ENCODE measurements at regions of chr19 and their contacts with region 1.

Region 1: DNA sequence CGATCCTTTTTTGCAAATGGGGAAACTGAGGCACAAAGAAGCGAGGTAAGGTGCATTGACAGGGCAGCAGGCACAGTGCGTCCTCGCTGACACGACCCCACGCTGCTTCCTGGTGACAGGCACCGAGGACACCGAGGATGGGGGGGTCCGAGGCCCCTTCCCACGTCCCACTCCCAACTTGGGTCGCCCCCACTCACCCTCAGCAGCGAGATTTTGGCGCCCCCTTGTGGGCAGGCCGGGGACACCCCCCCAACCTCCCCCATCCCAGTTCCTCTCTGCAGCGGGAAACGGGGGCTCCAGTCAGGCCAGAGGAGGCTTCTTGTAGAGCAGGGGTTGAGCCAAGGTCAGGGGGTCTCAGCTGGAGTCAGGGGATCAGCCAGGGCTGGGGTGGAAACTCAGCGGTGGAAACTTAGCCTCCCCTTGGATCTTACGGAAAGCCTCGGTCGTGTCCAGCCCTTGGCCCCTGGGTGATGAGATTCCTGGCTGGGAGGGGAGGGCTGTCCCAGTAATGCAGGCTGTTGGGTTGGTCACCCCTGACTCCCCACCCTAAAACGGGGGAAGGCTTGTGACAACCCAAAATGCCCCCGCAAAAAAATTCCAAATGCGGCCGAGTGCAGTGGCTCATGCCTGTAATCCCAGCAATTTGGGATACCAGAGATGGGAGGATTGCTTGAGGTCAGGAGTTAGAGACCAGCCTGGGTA is 8.2 kb downstream of the SMIM24 start:
- DNase-seq: peak in 1 of 2 donors; percentile 22
- H3K4me3 ChIP-seq: no peak overlapping the region
- H3K27ac ChIP-seq: no peak overlapping the region
- H3K4me1 ChIP-seq: peaks cover 0 to 6% of the 10 kb centered on the region in 2 donors
- H3K27me3 ChIP-seq: no peaks in the 10 kb centered on the region
- CTCF ChIP-seq: peak; percentile 46 to 90 (median 66)
- POLR2A ChIP-seq: no peak

Region 2: GRCh38 chr19:3304871-3305423 is 167.2 kb before region 1 on chr19:
- intact Hi-C with region 1: no loop called
- DNase-seq: peak; percentile 62 to 76
- H3K4me3 ChIP-seq: no peak overlapping the region
- H3K27ac ChIP-seq: no peak overlapping the region
- H3K4me1 ChIP-seq: peaks cover 0 to 4% of the 10 kb centered on the region in 2 donors
- H3K27me3 ChIP-seq: no peaks in the 10 kb centered on the region
- CTCF ChIP-seq: peak; percentile 70 to 88 (median 80)
- POLR2A ChIP-seq: no peak

Region 3: GRCh38 chr19:3333662-3334061 is 138.4 kb before region 1 on chr19:
- intact Hi-C with region 1: loop called (anchors 2 kb)
- DNase-seq: no peak
- H3K4me3 ChIP-seq: no peak overlapping the region
- H3K27ac ChIP-seq: peak overlapping the region in 1 of 3 donors; percentile 26
- H3K4me1 ChIP-seq: peaks cover 34 to 55% of the 10 kb centered on the region in 2 donors
- H3K27me3 ChIP-seq: no peaks in the 10 kb centered on the region
- CTCF ChIP-seq: no peak
- POLR2A ChIP-seq: no peak

Region 4: DNA sequence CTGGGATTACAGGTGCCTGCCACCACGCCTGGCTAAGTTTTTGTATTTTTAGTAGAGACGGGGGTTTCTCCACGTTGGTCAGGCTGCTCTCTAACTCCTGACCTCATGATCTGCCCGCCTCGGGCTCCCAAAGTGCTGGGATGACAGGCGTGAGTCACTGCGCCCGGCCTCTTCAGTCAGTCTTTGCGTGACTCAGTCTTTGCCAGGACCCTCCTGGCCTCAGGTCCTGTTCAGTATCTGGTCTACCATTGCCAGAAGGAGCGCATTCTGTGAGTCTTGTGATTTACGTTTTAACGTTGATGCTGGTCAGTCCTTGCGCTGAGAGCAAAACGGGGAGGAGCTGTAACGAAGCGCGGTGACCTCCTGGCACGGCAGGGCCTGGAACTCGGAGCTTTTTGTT is 93.0 kb after region 1 on chr19:
- intact Hi-C with region 1: no loop called
- DNase-seq: no peak
- H3K4me3 ChIP-seq: no peak overlapping the region
- H3K27ac ChIP-seq: no peak overlapping the region
- H3K4me1 ChIP-seq: no peaks in the 10 kb centered on the region
- H3K27me3 ChIP-seq: no peaks in the 10 kb centered on the region
- CTCF ChIP-seq: no peak
- POLR2A ChIP-seq: no peak

Region 5: DNA sequence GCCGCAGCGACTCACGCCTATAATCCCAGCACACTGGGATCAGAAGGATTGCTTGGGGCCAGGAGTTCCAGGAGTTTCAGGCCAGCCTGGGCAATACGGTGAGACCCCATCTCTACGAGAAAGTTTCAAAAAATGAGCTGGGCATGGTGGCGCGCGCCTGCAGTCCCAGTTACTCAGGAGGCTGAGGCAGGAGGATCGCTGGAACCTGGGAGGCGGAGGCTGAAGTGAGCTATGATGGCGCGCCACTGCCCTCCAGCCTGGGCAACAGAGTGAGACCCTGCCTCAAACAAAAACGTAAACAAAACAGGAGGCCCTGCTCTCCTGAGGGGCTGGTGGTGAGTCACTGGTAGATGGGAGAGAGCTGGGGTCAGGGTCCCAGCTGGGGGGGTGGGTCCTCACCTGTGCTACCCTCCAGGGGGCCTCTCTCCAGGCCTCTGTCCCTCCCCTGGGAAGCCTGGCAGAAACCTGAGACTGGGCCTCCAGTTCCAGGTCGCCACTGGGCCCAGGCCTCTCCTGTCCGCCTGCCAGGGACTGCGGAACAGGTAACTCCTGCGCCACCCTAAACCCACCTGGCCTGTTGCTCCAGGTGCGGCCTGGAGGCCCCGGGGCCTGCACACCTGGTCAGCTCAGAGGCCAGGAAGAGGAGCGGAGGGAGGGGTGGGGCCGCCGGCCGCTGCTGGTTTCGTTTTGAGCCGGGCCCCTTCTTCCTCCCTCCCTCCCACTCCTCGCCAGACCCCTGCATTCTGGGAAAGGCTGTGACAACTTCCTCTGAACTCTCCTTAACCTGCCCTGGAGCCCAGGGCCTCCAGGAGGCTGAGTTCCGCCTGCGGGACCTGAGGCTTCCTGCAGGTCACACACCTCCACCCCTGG is 611.8 kb after region 1 on chr19:
- intact Hi-C with region 1: no loop called
- DNase-seq: no peak
- H3K4me3 ChIP-seq: no peak overlapping the region
- H3K27ac ChIP-seq: no peak overlapping the region
- H3K4me1 ChIP-seq: no peaks in the 10 kb centered on the region
- H3K27me3 ChIP-seq: no peaks in the 10 kb centered on the region
- CTCF ChIP-seq: no peak
- POLR2A ChIP-seq: no peak